K562 (cell line): ENCODE measurements at regions of chr11 and their contacts with region 1.

Region 1: DNA sequence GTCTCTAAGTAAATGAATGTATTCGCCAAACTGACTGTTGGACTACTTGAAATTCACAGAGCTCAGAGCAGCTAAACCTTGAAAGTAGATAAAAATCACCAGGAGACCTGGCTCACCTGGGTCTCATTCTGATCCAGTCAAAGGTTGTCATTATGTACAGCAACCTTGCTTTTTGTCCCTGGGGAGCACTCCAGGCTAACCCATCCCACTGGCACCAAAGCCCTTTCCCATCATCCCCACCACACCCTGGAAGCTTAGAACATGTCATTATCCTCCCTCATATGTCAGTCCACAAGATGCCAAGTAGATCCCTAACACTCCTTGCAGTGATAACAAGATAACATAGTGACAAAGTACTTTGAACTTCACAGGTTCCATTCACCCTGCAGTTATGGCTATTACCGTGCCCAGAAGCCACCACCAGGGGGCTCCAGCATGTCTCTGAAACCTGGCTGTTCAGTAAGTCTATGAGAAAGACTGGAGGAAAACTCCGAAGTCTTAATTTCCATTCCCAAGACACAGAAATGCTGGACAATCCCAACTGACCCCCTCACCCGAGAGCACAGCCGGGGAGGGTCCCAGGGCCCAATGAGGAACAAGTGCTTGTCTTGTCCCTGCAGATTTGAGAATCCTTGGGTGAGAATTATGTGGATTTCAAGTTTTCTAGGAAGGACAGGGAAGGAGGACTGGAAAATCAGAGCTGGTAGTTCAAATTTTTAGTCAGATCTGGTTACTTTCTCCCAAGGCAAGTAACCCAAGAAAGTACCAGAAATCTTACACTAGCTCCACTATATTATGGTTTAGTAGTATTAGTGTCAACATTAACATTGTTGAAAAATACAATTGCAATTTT is 43.0 kb upstream of the USP47 start:
- DNase-seq: peak; percentile 64 to 83 (median 71)
- ATAC-seq: peak; percentile 97
- H3K4me3 ChIP-seq: no peak overlapping the region
- H3K27ac ChIP-seq: no peak overlapping the region
- H3K4me1 ChIP-seq: no peaks in the 10 kb centered on the region; a peak in 1 of 5 replicates
- H3K27me3 ChIP-seq: no peaks in the 10 kb centered on the region; a peak in 1 of 5 replicates
- CTCF ChIP-seq: peak; percentile 87 to 93 (median 92)
- EP300 ChIP-seq: no peak
- POLR2A ChIP-seq: no peak
- RAD21 ChIP-seq: peak; percentile 83 to 93

Region 2: DNA sequence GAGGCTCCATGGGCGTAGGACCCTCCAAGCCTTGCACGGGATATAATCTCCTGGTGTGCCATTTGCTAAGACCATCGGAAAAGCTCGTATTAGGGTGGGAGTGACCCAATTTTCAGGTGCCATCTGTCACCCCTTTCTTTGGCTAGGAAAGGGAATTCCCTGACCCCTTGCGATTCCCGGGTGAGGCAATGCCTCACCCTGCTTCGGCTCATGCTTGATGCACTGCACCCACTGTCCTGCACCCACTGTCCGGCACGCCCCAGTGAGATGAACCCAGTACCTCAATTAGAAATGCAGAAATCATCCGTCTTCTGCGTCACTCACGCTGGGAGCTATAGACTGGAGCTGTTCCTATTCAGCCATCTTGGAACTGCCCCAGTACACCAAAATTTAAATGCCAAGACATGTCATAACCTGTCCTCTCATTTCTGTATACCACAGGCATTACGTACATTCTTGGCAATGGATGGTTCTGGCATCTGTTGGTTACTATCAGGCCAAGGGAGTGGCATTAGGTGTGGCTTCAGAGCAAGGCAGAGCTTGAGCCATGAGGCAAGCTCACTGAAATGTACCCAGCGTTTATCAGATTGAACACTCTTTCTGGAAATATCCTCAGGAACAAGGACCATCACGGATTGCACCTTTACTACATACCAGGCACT is 81.6 kb before region 1 on chr11:
- CTCF ChIA-PET with region 1: no interaction called
- POLR2A ChIA-PET with region 1: no interaction called
- in situ Hi-C with region 1: no loop called
- intact Hi-C with region 1: no loop called
- DNase-seq: no peak
- ATAC-seq: no peak
- H3K4me3 ChIP-seq: no peak overlapping the region
- H3K27ac ChIP-seq: no peak overlapping the region
- H3K4me1 ChIP-seq: no peaks in the 10 kb centered on the region
- H3K27me3 ChIP-seq: no peaks in the 10 kb centered on the region
- CTCF ChIP-seq: no peak
- EP300 ChIP-seq: no peak
- POLR2A ChIP-seq: no peak
- RAD21 ChIP-seq: no peak

Region 3: DNA sequence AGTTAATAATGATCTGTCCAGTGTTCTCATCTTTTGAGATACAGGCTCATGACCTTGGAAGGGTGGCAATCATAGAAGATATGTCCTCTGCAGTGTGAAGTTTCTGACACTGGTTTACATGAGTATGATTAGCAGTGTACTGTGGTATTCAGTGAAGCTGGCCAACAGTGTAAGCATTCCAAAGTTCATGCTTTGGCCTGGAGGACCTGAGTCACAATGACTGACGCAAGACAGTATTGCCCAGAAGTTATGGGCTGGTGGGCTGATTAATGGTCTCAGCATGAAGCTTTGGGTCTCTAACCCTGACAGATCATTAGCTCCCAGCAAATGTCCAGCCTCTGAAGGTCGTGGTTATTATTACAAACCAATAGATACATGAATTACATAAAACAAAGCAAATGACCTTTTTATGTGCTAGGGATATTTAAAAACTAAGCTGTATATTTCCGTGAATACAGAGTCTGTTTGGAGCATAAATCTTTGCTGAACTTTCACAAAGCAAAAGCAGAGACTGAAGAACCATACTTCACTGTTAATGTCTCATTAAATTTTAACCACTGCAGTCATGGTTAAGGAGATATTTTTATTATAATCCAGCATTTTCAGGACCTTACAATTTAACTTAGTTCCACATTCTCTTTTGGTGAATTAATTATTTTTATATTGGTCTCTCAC is 14.6 kb after region 1 on chr11:
- CTCF ChIA-PET with region 1: no interaction called
- POLR2A ChIA-PET with region 1: interaction called, 11 read pairs
- in situ Hi-C with region 1: no loop called
- intact Hi-C with region 1: no loop called
- DNase-seq: peak in 1 of 4 experiments; percentile 39
- ATAC-seq: no peak
- H3K4me3 ChIP-seq: no peak overlapping the region
- H3K27ac ChIP-seq: peak overlapping the region; percentile 23; the same call in 1 of the 3 replicates
- H3K4me1 ChIP-seq: peaks cover 8 to 29% of the 10 kb centered on the region in 2 experiments
- H3K27me3 ChIP-seq: no peaks in the 10 kb centered on the region
- CTCF ChIP-seq: no peak
- EP300 ChIP-seq: no peak
- POLR2A ChIP-seq: no peak
- RAD21 ChIP-seq: no peak

Region 4: DNA sequence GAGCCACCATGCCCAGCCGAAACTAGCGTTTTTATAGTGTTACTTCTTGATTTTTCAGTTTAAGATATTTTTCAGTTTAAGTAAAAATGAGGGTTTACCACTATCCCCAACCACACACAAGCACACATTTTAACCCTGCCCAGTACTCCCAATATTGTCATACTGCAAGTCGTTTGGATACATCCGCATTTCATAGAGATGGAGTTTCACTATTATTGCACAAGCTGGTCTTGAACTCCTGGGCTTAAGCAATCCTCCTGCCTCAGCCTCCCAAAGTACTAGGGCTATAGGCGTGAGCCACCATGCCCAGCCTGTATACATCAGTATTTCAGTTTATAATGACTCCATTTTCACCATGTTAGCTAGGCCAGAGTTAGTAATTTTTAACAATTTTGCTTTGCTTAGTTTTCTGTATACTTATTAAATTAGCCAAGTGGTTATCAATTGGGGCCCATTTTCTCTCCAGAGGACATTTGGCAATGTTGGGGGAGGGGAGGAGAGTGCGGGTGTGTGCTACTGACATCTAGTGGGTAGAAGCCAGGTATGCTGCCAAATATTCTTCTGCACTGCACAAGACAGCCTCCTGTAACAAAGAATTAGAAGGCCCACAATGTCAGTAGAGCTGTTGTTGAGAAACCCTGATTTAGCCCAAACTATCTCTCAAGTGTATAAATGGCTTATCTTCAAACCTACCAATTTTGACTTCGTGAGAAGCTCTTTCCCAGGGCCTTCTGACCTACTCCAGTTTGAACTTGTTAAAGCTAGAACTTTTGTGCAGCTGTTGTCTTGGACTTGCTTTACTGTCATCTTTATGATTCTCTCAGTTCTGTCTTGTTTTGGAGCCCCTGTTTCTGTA is 50.3 kb after region 1 on chr11:
- CTCF ChIA-PET with region 1: interaction called, 6 read pairs
- POLR2A ChIA-PET with region 1: no interaction called
- in situ Hi-C with region 1: no loop called
- intact Hi-C with region 1: loop called (anchors 1 kb)
- DNase-seq: peak; percentile 42 to 86 (median 53)
- ATAC-seq: peak; percentile 85
- H3K4me3 ChIP-seq: no peak overlapping the region
- H3K27ac ChIP-seq: peak overlapping the region; percentile 40
- H3K4me1 ChIP-seq: peaks cover 10 to 56% of the 10 kb centered on the region in 2 experiments; a peak in 4 of 5 replicates
- H3K27me3 ChIP-seq: no peaks in the 10 kb centered on the region
- CTCF ChIP-seq: peak; percentile 83 to 92 (median 85)
- EP300 ChIP-seq: no peak; the same call in 1 of the 2 replicates
- POLR2A ChIP-seq: no peak
- RAD21 ChIP-seq: peak; percentile 67 to 79

Region 5: DNA sequence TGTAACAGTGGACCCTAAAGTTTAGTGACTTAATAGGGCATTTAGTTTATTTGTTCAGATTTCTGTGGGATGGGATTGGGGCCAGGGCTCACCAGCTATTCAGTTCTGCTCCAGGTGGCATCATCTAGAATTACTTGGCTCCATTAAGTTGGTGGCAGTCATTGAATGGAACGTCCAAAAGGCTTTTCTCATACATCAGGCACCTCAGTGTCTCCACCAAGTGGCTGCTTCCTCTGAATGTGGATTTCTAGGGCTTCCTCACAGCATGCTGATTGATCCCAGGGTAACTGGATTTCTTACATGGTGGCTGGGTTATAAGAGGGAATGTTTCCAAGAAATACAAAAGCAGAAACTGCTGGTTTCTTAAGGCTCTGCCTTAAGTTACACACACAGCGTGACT is 77.6 kb after region 1 on chr11:
- CTCF ChIA-PET with region 1: interaction called, 8 read pairs
- POLR2A ChIA-PET with region 1: interaction called, 3 read pairs
- in situ Hi-C with region 1: no loop called
- intact Hi-C with region 1: loop called (anchors 2 kb)
- DNase-seq: peak in 3 of 4 experiments; percentile 16 to 59 (median 21)
- ATAC-seq: peak; percentile 80
- H3K4me3 ChIP-seq: no peak overlapping the region
- H3K27ac ChIP-seq: no peak overlapping the region
- H3K4me1 ChIP-seq: no peaks in the 10 kb centered on the region; a peak in 2 of 5 replicates
- H3K27me3 ChIP-seq: no peaks in the 10 kb centered on the region
- CTCF ChIP-seq: peak; percentile 58 to 61 (median 58)
- EP300 ChIP-seq: no peak
- POLR2A ChIP-seq: no peak
- RAD21 ChIP-seq: peak; percentile 24 to 56; a peak in 3 of 4 replicates

Region 6: DNA sequence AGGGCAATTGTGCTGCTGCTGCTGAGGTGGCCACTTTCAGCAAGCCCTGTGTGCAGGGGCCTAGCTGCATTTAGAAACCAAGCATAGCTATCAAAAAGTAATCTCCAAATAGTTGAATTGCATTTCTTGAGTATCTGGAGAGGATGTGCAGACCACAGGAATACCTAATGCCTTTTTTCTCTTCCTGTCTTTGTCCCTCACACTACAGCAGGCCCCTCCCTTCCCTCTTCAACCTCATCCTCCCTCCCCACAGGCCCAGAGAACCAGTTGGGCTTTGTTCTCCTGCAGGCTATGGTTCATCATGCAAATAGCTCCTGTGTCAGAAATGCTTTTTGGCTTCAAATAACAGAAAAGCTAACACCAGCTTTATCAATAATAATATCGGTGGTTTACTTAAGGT is 161.9 kb after region 1 on chr11:
- CTCF ChIA-PET with region 1: interaction called, 6 read pairs
- POLR2A ChIA-PET with region 1: no interaction called
- in situ Hi-C with region 1: no loop called
- intact Hi-C with region 1: loop called (anchors 5 kb)
- DNase-seq: no peak
- ATAC-seq: no peak
- H3K4me3 ChIP-seq: no peak overlapping the region
- H3K27ac ChIP-seq: no peak overlapping the region
- H3K4me1 ChIP-seq: peaks cover 1 to 6% of the 10 kb centered on the region in 2 experiments; a peak in 3 of 5 replicates
- H3K27me3 ChIP-seq: peaks cover 9 to 23% of the 10 kb centered on the region in 2 experiments; a peak in 4 of 5 replicates
- CTCF ChIP-seq: no peak
- EP300 ChIP-seq: no peak
- POLR2A ChIP-seq: no peak
- RAD21 ChIP-seq: no peak